ENCODE measurements at regions of chr6 and their contacts with region 1.

Region 1: DNA sequence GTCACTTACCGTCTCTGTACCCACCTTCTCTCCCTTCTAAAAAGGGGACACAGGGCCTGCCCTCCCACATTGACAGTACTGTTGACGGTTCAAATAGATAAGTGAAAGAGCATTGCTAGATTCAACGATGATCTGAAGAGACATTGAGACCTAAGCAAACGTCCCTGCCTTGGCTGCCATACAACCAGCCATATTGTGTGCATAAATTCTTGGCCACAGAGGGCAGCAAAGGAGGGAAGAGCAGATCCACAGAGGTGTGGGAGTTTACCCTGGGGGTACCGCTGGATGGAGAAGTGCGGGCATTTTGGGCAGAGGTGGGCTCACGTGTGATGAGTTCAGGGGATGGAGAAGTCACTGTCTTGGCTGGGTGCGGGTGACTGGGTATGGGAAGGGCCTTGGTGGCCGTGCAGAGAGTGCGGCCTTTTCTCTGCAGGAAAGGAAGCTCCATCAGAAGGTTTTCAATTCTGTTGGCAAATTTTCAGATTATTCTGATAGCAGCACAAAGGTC is 85.6 kb downstream of the POPDC3 start:
- DNase-seq: no peak
- ATAC-seq: no peak
- H3K4me3 ChIP-seq: no peak overlapping the region
- H3K27ac ChIP-seq: no peak overlapping the region
- H3K4me1 ChIP-seq: no peaks in the 10 kb centered on the region
- H3K27me3 ChIP-seq: no peaks in the 10 kb centered on the region
- CTCF ChIP-seq: no peak

Region 2: GRCh38 chr6:105402939-105403935 is 309.1 kb after region 1 on chr6 and contains the start of gene PREP:
- intact Hi-C with region 1: loop called in 2 of 3 experiments (anchors 5 to 10 kb)
- DNase-seq: peak; percentile 83 to 94 (median 88)
- ATAC-seq: peak; percentile 96 to 97 (median 96)
- H3K4me3 ChIP-seq: peak within 1 kb of the TSS; percentile 86 to 95 (median 94)
- H3K27ac ChIP-seq: peak within 1 kb of the TSS; percentile 58 to 78 (median 68)
- H3K4me1 ChIP-seq: peaks cover 4 to 15% (median 6%) of the 10 kb centered on the region in 3 donors
- H3K27me3 ChIP-seq: no peaks in the 10 kb centered on the region
- CTCF ChIP-seq: peak; percentile 59 to 77 (median 68)
- total RNA-seq, gene PREP: 8.4 to 16.5 (median 13.7) TPM

Measured in pancreas (tissue), 10 donors.